Gastrocnemius medialis (tissue), 4 donors: ENCODE measurements at regions of chr9 and their contacts with region 1.

Region 1: GRCh38 chr9:91422758-91423711 is 597 bp downstream of the NFIL3 start:
- DNase-seq: peak; percentile 68 to 81
- ATAC-seq: peak; percentile 26 to 32
- H3K4me3 ChIP-seq: peak overlapping the region; percentile 76 to 94 (median 83)
- H3K27ac ChIP-seq: peak overlapping the region; percentile 94 to 99 (median 96)
- H3K4me1 ChIP-seq: peaks cover 7 to 30% of the 10 kb centered on the region in 2 donors
- H3K27me3 ChIP-seq: no peaks in the 10 kb centered on the region
- CTCF ChIP-seq: peak in 3 of 5 experiments; percentile 19 to 41 (median 36)
- POLR2A ChIP-seq: peak; percentile 63 to 66

Region 2: DNA sequence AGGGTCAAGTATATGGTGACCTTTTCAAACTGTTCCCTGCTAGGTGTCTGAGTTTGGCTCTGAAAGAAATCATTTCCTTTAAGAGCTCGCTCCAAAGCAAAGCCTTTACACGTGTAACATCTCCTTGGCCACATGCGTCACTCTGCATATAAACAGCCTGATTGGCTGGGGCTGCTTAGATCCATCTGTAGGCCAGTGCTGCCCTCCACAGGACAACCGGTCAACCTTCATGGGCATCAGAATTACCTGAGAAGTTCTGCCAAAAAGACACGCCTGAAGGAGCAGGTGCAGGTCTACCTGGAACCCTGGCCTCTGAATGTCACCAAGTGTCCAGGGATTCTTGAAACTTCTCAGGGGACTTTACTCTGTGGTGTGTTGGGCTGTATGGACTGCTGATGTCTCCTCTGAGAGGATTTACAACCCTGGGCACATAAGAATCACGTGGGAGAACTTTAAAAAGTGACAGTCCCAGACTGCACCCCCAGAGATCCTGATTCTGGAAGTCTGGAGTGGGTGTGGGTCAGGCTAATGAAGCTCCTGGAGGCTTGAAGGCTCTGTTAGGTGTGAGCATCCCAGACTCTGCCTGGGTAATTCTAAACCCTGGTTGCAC is 1320.6 kb before region 1 on chr9:
- in situ Hi-C with region 1: no loop called
- intact Hi-C with region 1: loop called (anchors 10 kb)
- DNase-seq: peak; percentile 81 to 83
- ATAC-seq: peak; percentile 59 to 80
- H3K4me3 ChIP-seq: no peak overlapping the region
- H3K27ac ChIP-seq: no peak overlapping the region
- H3K4me1 ChIP-seq: peaks cover 30 to 32% of the 10 kb centered on the region in 2 donors
- H3K27me3 ChIP-seq: no peaks in the 10 kb centered on the region
- CTCF ChIP-seq: peak; percentile 79 to 89 (median 80)
- POLR2A ChIP-seq: no peak

Region 3: GRCh38 chr9:91036826-91037510 is 386.1 kb before region 1 on chr9:
- in situ Hi-C with region 1: loop called in 3 of 4 experiments (anchors 5 to 25 kb)
- intact Hi-C with region 1: loop called (anchors 1 kb)
- DNase-seq: peak; percentile 66 to 82
- ATAC-seq: peak; percentile 95 to 98
- H3K4me3 ChIP-seq: no peak overlapping the region
- H3K27ac ChIP-seq: peak overlapping the region in 1 of 4 donors; percentile 20
- H3K4me1 ChIP-seq: peaks cover 4 to 17% of the 10 kb centered on the region in 2 donors
- H3K27me3 ChIP-seq: no peaks in the 10 kb centered on the region
- CTCF ChIP-seq: peak; percentile 63 to 85 (median 76)
- POLR2A ChIP-seq: no peak

Region 4: DNA sequence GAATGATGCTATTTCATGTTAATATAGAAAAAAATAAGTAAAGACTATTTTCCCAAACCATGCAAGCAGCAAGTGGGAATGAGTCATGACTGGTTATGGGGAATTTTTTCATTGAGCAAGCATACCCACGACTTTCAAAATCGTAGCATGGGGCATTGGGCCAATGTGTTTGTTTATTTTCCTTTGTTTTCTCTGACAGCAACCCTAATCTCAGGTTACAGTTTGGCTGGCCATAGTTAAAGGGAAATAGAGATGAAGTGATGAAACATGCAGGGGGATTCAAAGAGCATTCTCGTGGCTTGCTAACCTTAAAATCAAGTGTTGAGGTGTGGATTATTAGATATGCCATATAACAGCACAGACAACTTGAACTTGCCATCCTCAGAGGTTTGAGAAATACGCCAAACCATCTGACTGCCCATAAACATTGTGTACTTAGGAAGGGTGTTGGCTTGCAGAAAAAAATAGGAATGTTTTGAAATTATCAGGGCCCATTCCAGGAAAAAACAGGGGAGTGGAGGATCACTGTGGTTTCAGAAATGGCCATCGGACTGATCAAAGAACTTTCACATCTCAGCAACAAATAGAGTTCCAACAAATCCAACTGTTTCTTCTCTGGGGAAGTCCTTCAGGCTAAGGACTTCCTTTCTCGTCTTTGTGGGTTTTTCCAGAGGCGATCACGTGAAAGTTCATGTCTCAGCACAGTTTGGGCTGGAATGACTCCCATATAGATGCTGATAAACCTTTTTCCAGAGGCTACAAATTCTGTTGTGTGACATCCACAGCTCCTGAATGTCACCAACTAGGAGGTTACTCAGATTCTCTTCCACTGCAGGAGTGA is 362.3 kb before region 1 on chr9:
- in situ Hi-C with region 1: no loop called
- intact Hi-C with region 1: loop called (anchors 2 kb)
- DNase-seq: peak; percentile 70 to 81
- ATAC-seq: peak; percentile 71 to 73
- H3K4me3 ChIP-seq: no peak overlapping the region
- H3K27ac ChIP-seq: peak overlapping the region; percentile 82 to 87 (median 84)
- H3K4me1 ChIP-seq: peaks cover 42 to 43% of the 10 kb centered on the region in 2 donors
- H3K27me3 ChIP-seq: no peaks in the 10 kb centered on the region
- CTCF ChIP-seq: no peak
- POLR2A ChIP-seq: peak in 1 of 2 donors; percentile 12

Region 5: DNA sequence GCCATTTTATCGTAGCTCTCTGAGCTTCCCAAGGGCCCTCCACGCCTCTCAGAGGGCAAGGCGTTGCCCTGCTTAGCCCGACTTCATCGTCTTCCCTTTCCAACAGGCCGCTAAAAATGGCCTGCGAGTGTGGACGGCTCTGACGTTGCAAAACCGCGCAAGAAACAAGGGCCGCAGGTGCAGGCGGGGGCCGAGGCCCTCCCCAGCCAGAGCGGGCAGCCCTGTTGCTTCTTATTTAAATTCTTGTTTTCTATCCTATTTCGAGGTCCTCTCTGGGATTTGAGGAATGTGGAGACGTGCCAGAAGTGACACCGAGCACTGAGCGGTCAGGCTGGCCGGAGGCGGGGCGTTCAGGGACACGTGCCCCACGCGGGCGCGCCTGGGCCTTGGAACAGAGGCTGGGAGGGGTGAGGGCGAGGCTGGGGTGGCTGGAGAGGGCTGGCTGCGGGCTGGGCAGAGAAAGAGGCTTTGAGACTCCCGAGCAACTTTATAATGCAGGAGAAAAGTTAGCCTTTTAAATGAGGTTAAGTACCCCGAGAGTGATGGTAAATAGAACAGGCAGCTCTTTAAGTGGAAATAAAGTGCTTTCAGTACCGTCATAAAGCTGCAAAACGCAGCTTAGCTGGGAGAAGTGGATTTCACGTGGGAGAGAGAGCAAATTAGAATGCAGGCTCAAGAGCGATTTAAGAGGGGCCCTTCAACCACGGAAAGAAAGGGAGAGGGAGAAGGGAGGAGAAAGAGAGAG is 304.9 kb before region 1 on chr9:
- in situ Hi-C with region 1: no loop called
- intact Hi-C with region 1: loop called (anchors 5 kb)
- DNase-seq: peak; percentile 84 to 90
- ATAC-seq: peak; percentile 86 to 89
- H3K4me3 ChIP-seq: peak overlapping the region; percentile 41 to 50 (median 42)
- H3K27ac ChIP-seq: peak overlapping the region; percentile 80 to 90 (median 82)
- H3K4me1 ChIP-seq: peaks cover 25 to 32% of the 10 kb centered on the region in 2 donors
- H3K27me3 ChIP-seq: no peaks in the 10 kb centered on the region
- CTCF ChIP-seq: no peak
- POLR2A ChIP-seq: peak; percentile 55 to 70

Region 6: GRCh38 chr9:91301161-91301560 is 121.9 kb before region 1 on chr9:
- in situ Hi-C with region 1: no loop called
- intact Hi-C with region 1: loop called (anchors 2 kb)
- DNase-seq: no peak
- ATAC-seq: peak; percentile 34 to 42
- H3K4me3 ChIP-seq: no peak overlapping the region
- H3K27ac ChIP-seq: peak overlapping the region; percentile 78 to 90 (median 84)
- H3K4me1 ChIP-seq: peaks cover 61 to 68% of the 10 kb centered on the region in 2 donors
- H3K27me3 ChIP-seq: no peaks in the 10 kb centered on the region
- CTCF ChIP-seq: no peak
- POLR2A ChIP-seq: no peak